Heart left ventricle (tissue), 16 donors: ENCODE measurements at regions of chr3 and their contacts with region 1.

Region 1: GRCh38 chr3:21839592-21839991 is 88.6 kb upstream of the ZNF385D start:
- DNase-seq: peak in 4 of 5 donors; percentile 43 to 73 (median 60)
- ATAC-seq: peak; percentile 95 to 98 (median 96)
- H3K4me3 ChIP-seq: no peak overlapping the region
- H3K27ac ChIP-seq: peak overlapping the region in 9 of 12 donors; percentile 17 to 62 (median 54)
- H3K4me1 ChIP-seq: peaks cover 0 to 10% (median under 1%) of the 10 kb centered on the region in 12 donors
- H3K27me3 ChIP-seq: no peaks in the 10 kb centered on the region
- CTCF ChIP-seq: peak; percentile 32 to 72 (median 56)
- POLR2A ChIP-seq: no peak

Region 2: DNA sequence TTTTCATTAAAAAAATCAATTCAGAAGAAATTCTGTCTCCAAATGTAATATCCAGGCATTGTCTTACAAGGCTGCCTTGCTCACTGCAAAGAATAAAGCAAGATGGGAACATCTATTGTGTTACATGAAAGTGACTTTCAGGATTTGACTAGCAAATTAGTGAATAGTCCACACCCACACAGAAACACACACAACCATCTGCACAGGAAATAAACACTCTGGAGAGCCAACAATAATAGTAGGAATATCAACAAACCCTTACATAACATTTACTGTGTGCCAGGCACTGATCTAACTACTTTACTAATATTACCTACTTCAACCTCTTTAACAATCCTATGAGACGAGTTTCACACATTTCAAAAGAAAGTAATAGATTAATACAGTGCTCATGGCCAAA is 59.7 kb before region 1 on chr3:
- intact Hi-C with region 1: loop called in 2 of 10 experiments (anchors 10 kb)
- DNase-seq: peak in 1 of 5 donors; percentile 17
- ATAC-seq: peak; percentile 66 to 94 (median 83)
- H3K4me3 ChIP-seq: no peak overlapping the region
- H3K27ac ChIP-seq: peak overlapping the region in 8 of 12 donors; percentile 10 to 60 (median 41)
- H3K4me1 ChIP-seq: peaks cover 3 to 49% (median 16%) of the 10 kb centered on the region in 12 donors
- H3K27me3 ChIP-seq: no peaks in the 10 kb centered on the region
- CTCF ChIP-seq: no peak
- POLR2A ChIP-seq: no peak

Region 3: GRCh38 chr3:21795152-21795837 is 44.3 kb before region 1 on chr3:
- intact Hi-C with region 1: loop called in 2 of 10 experiments (anchors 5 kb)
- DNase-seq: peak; percentile 76 to 90 (median 86)
- ATAC-seq: peak; percentile 96 to 99 (median 98)
- H3K4me3 ChIP-seq: peak overlapping the region in 1 of 12 donors; percentile 1
- H3K27ac ChIP-seq: peak overlapping the region; percentile 25 to 78 (median 66)
- H3K4me1 ChIP-seq: peaks cover 3 to 63% (median 33%) of the 10 kb centered on the region in 12 donors
- H3K27me3 ChIP-seq: no peaks in the 10 kb centered on the region
- CTCF ChIP-seq: peak in 3 of 12 donors; percentile 11 to 44 (median 39)
- POLR2A ChIP-seq: no peak

Region 4: GRCh38 chr3:21806733-21807132 is 32.9 kb before region 1 on chr3:
- intact Hi-C with region 1: no loop called
- DNase-seq: no peak
- ATAC-seq: no peak
- H3K4me3 ChIP-seq: no peak overlapping the region
- H3K27ac ChIP-seq: no peak overlapping the region
- H3K4me1 ChIP-seq: peaks cover 0 to 29% (median 0%) of the 10 kb centered on the region in 12 donors
- H3K27me3 ChIP-seq: no peaks in the 10 kb centered on the region
- CTCF ChIP-seq: no peak
- POLR2A ChIP-seq: no peak

Region 5: DNA sequence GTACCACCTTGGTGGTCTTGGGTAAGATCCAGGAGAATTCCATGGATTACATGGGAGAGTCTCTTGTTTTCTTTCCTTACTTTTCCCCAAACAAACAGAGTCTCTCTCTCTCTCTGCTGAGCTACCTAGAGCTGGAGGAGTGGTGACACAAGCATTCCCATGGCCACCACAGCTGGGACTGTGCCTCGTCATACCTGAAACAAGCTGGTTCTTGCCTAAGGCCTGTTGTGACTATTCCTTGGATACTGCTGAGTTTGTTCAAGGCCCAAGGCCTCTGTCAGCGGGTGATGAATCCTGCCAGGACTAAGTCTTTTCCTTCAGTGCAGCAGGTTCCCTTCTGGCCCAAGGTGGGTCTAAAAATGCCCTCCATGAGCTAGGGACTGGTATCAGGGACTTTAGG is 289.5 kb after region 1 on chr3:
- intact Hi-C with region 1: no loop called
- DNase-seq: no peak
- ATAC-seq: no peak
- H3K4me3 ChIP-seq: no peak overlapping the region
- H3K27ac ChIP-seq: no peak overlapping the region
- H3K4me1 ChIP-seq: no peaks in the 10 kb centered on the region
- H3K27me3 ChIP-seq: no peaks in the 10 kb centered on the region
- CTCF ChIP-seq: no peak
- POLR2A ChIP-seq: no peak